ENCODE measurements at regions of chr5 and their contacts with region 1.

Region 1: GRCh38 chr5:56183506-56183905 is 49.6 kb downstream of the ANKRD55 start:
- DNase-seq: no peak
- ATAC-seq: peak in 1 of 4 donors; percentile 38
- H3K4me3 ChIP-seq: no peak overlapping the region
- H3K27ac ChIP-seq: no peak overlapping the region
- H3K4me1 ChIP-seq: no peaks in the 10 kb centered on the region
- H3K27me3 ChIP-seq: no peaks in the 10 kb centered on the region
- CTCF ChIP-seq: no peak
- POLR2A ChIP-seq: no peak

Region 2: GRCh38 chr5:55865831-55866230 is 317.7 kb before region 1 on chr5:
- intact Hi-C with region 1: no loop called
- DNase-seq: no peak
- ATAC-seq: peak in 1 of 4 donors; percentile 41
- H3K4me3 ChIP-seq: no peak overlapping the region
- H3K27ac ChIP-seq: no peak overlapping the region
- H3K4me1 ChIP-seq: no peaks in the 10 kb centered on the region
- H3K27me3 ChIP-seq: no peaks in the 10 kb centered on the region
- CTCF ChIP-seq: no peak
- POLR2A ChIP-seq: no peak

Region 3: DNA sequence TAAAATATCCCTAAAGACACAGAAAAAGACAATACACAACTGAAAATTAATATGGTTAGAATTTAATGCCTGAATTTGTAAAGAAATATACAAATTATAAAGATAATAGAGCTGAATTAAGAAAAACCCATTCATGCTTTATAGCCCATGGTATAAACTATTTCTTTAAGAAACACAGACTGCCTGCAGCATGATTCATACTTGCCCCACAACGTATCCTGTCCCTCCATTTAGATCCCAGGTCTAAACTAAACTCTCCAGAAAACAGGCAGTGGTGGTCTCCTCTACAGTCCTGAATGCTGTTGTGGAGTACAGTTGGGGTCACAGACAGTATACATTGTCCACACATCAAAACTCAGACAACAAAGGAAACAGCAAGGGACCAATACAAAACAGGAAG is 213.6 kb before region 1 on chr5:
- intact Hi-C with region 1: loop called in 1 of 2 experiments (anchors 10 kb)
- DNase-seq: no peak
- ATAC-seq: peak in 1 of 4 donors; percentile 11
- H3K4me3 ChIP-seq: no peak overlapping the region
- H3K27ac ChIP-seq: no peak overlapping the region
- H3K4me1 ChIP-seq: peaks cover 0 to 9% (median 0%) of the 10 kb centered on the region in 4 donors
- H3K27me3 ChIP-seq: no peaks in the 10 kb centered on the region
- CTCF ChIP-seq: no peak
- POLR2A ChIP-seq: no peak